ENCODE measurements at regions of chr12 and their contacts with region 1.

Region 1: DNA sequence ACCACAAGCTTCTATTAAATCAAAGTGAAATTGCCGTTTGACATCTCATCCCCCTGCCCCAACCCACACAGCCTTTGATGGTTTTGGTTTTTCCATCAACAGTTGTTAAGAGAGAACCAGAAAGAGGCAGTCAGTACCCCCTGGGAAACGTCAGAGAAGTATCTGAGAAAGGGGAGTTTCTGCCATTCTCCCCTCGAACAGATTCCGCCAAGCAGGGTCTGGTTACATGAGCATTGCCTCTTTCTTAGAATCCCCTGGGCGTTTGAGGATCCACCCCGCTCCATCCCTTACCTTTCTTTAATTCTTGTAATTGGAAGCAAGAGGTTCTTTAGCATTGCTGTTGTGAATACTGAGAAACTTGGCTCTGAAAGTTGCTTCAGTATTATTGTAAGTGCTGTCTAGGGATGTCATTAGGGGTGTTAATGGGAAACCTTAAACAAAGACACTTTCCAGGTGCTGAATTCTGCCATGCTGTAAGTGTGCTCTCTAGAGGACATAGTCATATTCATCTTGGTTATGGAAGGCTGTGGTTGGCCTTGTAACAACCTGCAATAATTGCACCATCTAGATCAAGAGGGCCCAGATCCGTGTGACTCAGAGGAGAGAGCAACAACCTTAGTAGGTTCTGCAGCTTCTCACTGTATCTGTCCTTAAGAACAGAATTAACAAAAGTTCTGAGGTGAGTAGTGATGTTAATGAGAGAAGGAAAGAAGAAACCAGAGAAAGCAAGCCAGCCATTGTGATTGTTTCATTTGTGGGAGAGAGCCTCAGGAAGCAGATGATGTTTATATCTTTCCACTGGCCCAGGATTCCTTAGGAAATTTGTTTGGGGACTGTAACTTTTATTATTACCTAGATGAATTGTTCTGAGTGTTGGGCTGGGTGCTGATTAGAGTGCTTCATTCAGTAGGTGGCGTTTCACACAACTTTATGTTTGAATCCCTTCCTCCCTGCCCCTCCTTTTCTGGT is 9.0 kb downstream of the TMBIM6 start:
- DNase-seq: peak; percentile 79
- ATAC-seq: peak; percentile 85
- H3K4me3 Mint-ChIP-seq: peak overlapping the region; percentile 57
- H3K27ac Mint-ChIP-seq: peak overlapping the region; percentile 94
- H3K4me1 Mint-ChIP-seq: peaks cover 78% of the 10 kb centered on the region
- H3K27me3 Mint-ChIP-seq: no peaks in the 10 kb centered on the region

Region 2: DNA sequence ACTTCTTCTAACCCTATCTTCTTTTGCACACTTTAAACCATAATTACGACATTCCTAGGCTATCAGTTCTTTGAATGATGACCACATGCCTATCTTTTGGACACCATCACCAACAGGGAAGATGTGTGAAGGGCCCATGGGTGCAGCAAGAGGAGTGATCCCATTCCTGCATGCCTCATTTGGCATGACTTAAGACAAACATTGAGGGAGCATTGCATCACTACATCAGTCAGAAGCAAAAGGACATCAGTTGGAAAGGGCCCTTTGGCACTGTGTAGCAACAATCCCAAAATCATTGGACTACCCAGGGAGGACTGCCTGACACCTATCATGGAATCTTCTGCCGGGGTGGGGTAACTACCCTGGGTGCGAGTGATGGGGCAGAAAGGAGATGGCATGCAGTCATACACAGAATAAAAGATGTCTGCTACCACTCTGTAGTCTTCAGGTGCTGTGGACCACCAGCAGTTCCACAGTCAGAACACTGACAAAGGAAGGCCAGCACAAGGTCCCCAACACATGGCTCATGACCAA is 19.7 kb before region 1 on chr12:
- CTCF ChIA-PET with region 1: no interaction called
- DNase-seq: no peak
- ATAC-seq: no peak
- H3K4me3 Mint-ChIP-seq: no peak overlapping the region
- H3K27ac Mint-ChIP-seq: no peak overlapping the region
- H3K4me1 Mint-ChIP-seq: peaks cover 8% of the 10 kb centered on the region
- H3K27me3 Mint-ChIP-seq: peaks cover 8% of the 10 kb centered on the region

Region 3: DNA sequence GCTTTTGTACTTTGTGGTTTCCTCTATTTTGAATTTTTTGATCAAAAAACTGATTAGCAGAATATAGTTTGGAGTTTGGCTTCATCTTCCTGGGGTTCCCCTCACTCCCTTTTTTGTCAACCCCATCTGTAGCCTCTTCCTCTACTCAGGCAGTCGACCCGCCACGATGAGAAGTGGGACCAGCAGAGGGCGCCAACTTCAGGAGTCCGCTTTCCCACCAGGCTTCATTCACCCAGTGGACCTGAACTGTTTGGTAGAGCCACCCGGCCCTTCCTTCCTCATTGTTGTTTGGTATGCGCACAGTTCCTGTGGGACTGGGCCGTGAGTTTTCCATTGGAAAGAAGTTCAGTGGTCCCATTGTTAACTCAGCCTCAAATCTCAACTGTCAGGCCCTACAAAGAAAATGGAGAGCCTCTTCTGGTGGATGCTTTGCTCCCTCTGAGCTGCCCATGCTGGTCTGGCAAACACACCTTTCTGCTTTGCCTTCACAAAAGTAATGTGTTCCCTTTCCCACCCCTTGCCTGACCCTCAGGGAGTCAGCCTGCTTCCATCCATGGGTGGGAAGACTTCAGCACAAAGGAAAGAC is 12.8 kb after region 1 on chr12:
- CTCF ChIA-PET with region 1: interaction called, 22 read pairs
- DNase-seq: peak; percentile 88
- ATAC-seq: peak; percentile 74
- H3K4me3 Mint-ChIP-seq: peak overlapping the region; percentile 17
- H3K27ac Mint-ChIP-seq: peak overlapping the region; percentile 85
- H3K4me1 Mint-ChIP-seq: peaks cover 52% of the 10 kb centered on the region
- H3K27me3 Mint-ChIP-seq: no peaks in the 10 kb centered on the region